Aorta (tissue), 5 donors: ENCODE measurements at regions of chr10 and their contacts with region 1.

Region 1: DNA sequence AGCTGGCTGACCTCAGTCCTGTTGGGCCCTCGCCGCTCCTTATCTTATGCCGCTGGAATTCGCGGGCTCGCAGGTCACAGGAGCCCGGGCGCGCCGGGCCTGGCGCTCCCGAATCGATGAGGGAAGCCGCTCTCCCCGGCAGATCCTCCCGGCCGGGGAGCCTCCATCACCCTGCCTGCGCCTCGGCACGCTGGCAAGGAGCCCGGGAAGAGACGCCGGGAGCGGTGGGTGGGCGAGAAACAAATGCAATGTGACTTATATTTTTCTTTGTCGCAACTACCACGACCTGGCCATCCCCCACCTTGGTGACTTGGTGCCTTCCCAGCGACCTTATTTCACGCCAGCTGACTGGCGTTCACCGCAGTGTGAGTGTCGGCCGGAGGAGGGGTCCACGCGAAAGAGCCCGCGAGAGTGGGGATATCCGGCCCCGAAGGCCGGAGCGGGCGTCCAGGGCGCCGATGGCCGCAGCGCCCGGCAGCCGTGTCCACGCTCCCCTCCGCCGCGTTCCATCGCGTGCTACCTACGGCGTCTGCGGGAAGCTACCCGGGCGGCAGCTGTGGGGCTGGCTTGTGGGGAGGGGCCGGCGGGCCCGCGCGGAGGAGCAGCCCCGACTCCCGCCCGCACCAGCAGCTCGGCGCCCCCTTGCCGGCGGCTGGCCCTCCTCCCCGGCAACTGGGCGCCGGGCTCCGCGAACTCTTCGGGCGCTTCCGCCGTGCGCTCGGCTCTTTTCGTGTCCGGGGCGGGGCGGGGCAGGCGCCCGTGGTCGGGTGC is 494 bp upstream of the BMPR1A start:
- DNase-seq: peak; percentile 88 to 97
- ATAC-seq: peak; percentile 93
- H3K4me3 ChIP-seq: peak overlapping the region; percentile 56
- H3K27ac ChIP-seq: peak overlapping the region; percentile 87
- H3K4me1 ChIP-seq: peaks cover 3 to 5% of the 10 kb centered on the region in 2 donors
- H3K27me3 ChIP-seq: no peaks in the 10 kb centered on the region

Region 2: DNA sequence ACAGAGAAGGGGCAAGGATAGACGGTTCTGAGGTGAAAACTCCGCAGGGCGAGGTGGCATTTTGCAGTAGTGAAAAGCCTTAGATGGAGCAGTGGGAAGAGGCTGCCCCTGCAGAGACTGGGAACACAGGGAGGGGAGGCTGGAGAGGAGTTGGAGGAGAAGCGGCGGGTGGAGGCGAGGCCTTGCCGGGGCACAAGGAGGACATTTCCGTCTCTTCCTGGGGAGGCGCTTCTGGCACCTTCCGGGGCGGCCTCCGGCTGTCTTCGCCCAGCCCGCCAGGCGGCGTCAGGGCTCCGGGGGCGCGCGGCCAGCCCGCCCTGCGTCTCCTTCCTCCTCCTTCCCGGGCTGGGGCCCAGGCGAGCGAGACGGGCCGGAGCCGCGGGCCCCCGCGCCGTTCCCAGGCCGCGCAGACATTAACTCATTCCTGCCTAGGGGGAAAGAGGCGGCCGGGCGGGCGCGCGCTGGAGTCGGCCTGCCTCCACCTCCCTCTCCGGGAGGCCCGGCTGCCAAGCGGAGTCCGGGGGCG is 44.9 kb before region 1 on chr10:
- intact Hi-C with region 1: loop called in 1 of 2 experiments (anchors 1 kb)
- DNase-seq: peak; percentile 94 to 96
- ATAC-seq: peak; percentile 94
- H3K4me3 ChIP-seq: peak overlapping the region; percentile 66 to 91
- H3K27ac ChIP-seq: peak overlapping the region; percentile 82 to 87
- H3K4me1 ChIP-seq: no peaks in the 10 kb centered on the region
- H3K27me3 ChIP-seq: no peaks in the 10 kb centered on the region

Region 3: GRCh38 chr10:86815035-86815617 is 59.2 kb after region 1 on chr10:
- intact Hi-C with region 1: loop called in 1 of 2 experiments (anchors 5 kb)
- DNase-seq: no peak
- ATAC-seq: peak; percentile 62
- H3K4me3 ChIP-seq: no peak overlapping the region
- H3K27ac ChIP-seq: peak overlapping the region; percentile 59 to 95
- H3K4me1 ChIP-seq: peaks cover 8 to 10% of the 10 kb centered on the region in 2 donors
- H3K27me3 ChIP-seq: no peaks in the 10 kb centered on the region

Region 4: GRCh38 chr10:86867149-86867548 is 111.2 kb after region 1 on chr10:
- intact Hi-C with region 1: loop called in 1 of 2 experiments (anchors 2 kb)
- DNase-seq: no peak
- ATAC-seq: no peak
- H3K4me3 ChIP-seq: no peak overlapping the region
- H3K27ac ChIP-seq: peak overlapping the region in 1 of 2 donors; percentile 25
- H3K4me1 ChIP-seq: peaks cover 3 to 9% of the 10 kb centered on the region in 2 donors
- H3K27me3 ChIP-seq: no peaks in the 10 kb centered on the region

Region 5: DNA sequence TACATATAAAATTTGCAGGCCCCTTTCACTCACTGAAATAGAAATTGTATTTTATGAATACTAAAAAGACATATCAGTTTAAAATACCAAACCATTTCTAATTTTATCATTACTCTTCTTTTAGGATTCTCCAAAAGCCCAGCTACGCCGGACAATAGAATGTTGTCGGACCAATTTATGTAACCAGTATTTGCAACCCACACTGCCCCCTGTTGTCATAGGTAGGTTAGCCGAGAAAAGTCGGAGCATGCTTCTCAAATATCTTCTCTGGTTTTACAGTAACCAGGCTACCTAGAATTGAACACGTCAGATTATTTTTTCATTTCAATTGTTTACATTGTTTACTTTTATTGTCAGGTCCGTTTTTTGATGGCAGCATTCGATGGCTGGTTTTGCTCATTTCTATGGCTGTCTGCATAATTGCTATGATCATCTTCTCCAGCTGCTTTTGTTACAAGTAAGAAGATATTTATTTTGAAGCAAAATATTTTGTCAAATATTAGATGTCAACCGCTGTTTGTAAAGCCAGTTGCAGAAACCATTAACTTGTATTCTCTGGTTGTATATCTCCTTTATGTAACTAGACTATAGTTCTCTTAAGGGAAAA is 143.8 kb after region 1 on chr10:
- intact Hi-C with region 1: loop called in 1 of 2 experiments (anchors 5 kb)
- DNase-seq: peak in 1 of 2 donors; percentile 60
- ATAC-seq: peak; percentile 88
- H3K4me3 ChIP-seq: no peak overlapping the region
- H3K27ac ChIP-seq: no peak overlapping the region
- H3K4me1 ChIP-seq: no peaks in the 10 kb centered on the region
- H3K27me3 ChIP-seq: no peaks in the 10 kb centered on the region